HCT116 (cell line): ENCODE measurements at regions of chr2 and their contacts with region 1.

Region 1: DNA sequence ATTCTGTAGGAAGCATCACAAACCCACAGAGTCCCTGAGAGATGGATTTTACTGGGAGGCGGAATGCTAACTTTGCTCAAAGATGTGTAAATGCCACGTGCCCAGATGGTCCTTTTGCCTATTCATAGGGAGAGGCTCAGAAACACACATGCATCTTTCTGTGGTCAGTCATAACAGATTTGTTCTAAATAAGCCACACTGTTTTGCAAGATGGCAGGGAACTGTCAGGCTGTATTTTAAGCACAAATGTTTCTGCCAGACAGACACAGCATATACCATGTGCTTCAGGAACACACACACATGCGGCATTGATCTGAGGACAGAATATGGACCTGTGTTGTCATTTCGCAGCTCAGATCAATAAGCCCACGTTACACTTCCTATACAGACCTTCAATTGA is 312.0 kb downstream of the GPD2 start:
- DNase-seq: no peak
- ATAC-seq: no peak
- H3K4me3 ChIP-seq: no peak overlapping the region
- H3K27ac ChIP-seq: no peak overlapping the region
- H3K4me1 ChIP-seq: no peaks in the 10 kb centered on the region
- H3K27me3 ChIP-seq: no peaks in the 10 kb centered on the region
- CTCF ChIP-seq: no peak
- POLR2A ChIP-seq: no peak
- RAD21 ChIP-seq: no peak

Region 2: GRCh38 chr2:157587576-157587975 is 839.4 kb after region 1 on chr2:
- CTCF ChIA-PET with region 1: no interaction called
- POLR2A ChIA-PET with region 1: no interaction called
- RAD21 ChIA-PET with region 1: no interaction called
- intact Hi-C with region 1: loop called (anchors 5 kb)
- DNase-seq: no peak
- ATAC-seq: no peak
- H3K4me3 ChIP-seq: no peak overlapping the region
- H3K27ac ChIP-seq: no peak overlapping the region
- H3K4me1 ChIP-seq: no peaks in the 10 kb centered on the region
- H3K27me3 ChIP-seq: no peaks in the 10 kb centered on the region
- CTCF ChIP-seq: no peak
- POLR2A ChIP-seq: no peak
- RAD21 ChIP-seq: no peak